Ovary (tissue), 10 donors: ENCODE measurements at regions of chr7 and their contacts with region 1.

Region 1: GRCh38 chr7:121503039-121503438 is 106.9 kb upstream of the FAM3C start:
- DNase-seq: no peak
- H3K4me3 ChIP-seq: no peak overlapping the region
- H3K27ac ChIP-seq: no peak overlapping the region
- H3K4me1 ChIP-seq: no peaks in the 10 kb centered on the region
- H3K27me3 ChIP-seq: no peaks in the 10 kb centered on the region
- CTCF ChIP-seq: no peak
- EP300 ChIP-seq: no peak
- POLR2A ChIP-seq: no peak

Region 2: GRCh38 chr7:121459148-121459547 is 43.9 kb before region 1 on chr7:
- intact Hi-C with region 1: loop called in 1 of 4 experiments (anchors 1 kb)
- DNase-seq: no peak
- H3K4me3 ChIP-seq: no peak overlapping the region
- H3K27ac ChIP-seq: no peak overlapping the region
- H3K4me1 ChIP-seq: no peaks in the 10 kb centered on the region
- H3K27me3 ChIP-seq: no peaks in the 10 kb centered on the region
- CTCF ChIP-seq: no peak
- EP300 ChIP-seq: no peak
- POLR2A ChIP-seq: no peak